Ascending aorta (tissue), 2 donors: ENCODE measurements at regions of chr1 and their contacts with region 1.

Region 1: GRCh38 chr1:9867408-9868243 is 42.4 kb downstream of the CTNNBIP1 start:
- DNase-seq: peak; percentile 20 to 90
- H3K4me3 ChIP-seq: no peak overlapping the region
- H3K27ac ChIP-seq: no peak overlapping the region
- H3K4me1 ChIP-seq: no peaks in the 10 kb centered on the region
- H3K27me3 ChIP-seq: no peaks in the 10 kb centered on the region
- CTCF ChIP-seq: peak; percentile 93 to 97 (median 94)

Region 2: DNA sequence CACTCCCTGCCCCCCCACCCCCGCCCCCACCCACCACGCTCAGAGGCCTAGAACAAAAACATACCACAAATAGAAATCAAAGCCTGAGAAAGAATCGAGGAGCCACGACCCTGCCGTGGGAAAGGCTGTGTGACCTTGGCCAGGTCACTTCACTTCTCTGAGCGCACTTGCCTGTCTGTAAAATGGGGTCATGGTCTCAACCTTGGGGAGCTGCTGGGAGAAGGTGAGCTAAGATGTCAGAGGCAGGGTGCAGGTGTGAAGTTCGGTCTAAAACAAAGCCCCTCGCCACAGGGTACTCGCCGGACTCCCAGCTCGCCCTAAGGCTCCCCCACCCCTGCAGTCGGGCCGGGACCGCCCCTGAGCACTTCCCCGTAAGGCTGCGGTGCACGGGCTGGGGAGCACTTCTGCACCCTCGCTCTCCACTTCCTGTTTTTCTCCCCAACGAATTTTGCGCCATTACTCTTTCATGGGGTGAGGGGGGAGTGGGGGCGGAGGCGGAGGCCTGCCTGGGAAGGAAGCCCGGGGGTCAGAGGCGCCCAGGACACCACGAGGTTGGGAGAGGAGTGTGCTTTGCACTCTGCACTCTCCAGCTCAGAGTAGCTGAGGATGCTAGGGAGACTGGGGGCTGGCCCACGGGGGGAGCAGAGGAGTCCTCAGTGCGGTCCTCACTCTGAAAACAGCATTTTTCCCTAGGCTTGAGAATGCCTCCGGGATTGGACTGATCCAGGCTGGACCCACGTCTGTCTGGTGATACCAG is 238.0 kb before region 1 on chr1:
- intact Hi-C with region 1: loop called (anchors 1 kb)
- DNase-seq: peak; percentile 25 to 74
- H3K4me3 ChIP-seq: peak overlapping the region in 1 of 2 donors; percentile 15
- H3K27ac ChIP-seq: no peak overlapping the region
- H3K4me1 ChIP-seq: no peaks in the 10 kb centered on the region
- H3K27me3 ChIP-seq: no peaks in the 10 kb centered on the region
- CTCF ChIP-seq: no peak

Region 3: GRCh38 chr1:9724706-9725476 is 142.7 kb before region 1 on chr1:
- intact Hi-C with region 1: loop called (anchors 1 kb)
- DNase-seq: no peak
- H3K4me3 ChIP-seq: no peak overlapping the region
- H3K27ac ChIP-seq: no peak overlapping the region
- H3K4me1 ChIP-seq: no peaks in the 10 kb centered on the region
- H3K27me3 ChIP-seq: no peaks in the 10 kb centered on the region
- CTCF ChIP-seq: peak; percentile 65 to 74 (median 67)

Region 4: GRCh38 chr1:9784508-9785133 is 83.0 kb before region 1 on chr1:
- intact Hi-C with region 1: loop called (anchors 1 kb)
- DNase-seq: no peak
- H3K4me3 ChIP-seq: no peak overlapping the region
- H3K27ac ChIP-seq: no peak overlapping the region
- H3K4me1 ChIP-seq: no peaks in the 10 kb centered on the region
- H3K27me3 ChIP-seq: no peaks in the 10 kb centered on the region
- CTCF ChIP-seq: peak; percentile 56 to 61 (median 59)

Region 5: GRCh38 chr1:9823943-9824701 is 43.5 kb before region 1 on chr1 and contains the start of gene CLSTN1:
- intact Hi-C with region 1: loop called (anchors 5 kb)
- DNase-seq: peak in 1 of 2 donors; percentile 94
- H3K4me3 ChIP-seq: peak within 1 kb of the TSS; percentile 89 to 96
- H3K27ac ChIP-seq: peak within 1 kb of the TSS; percentile 90 to 96
- H3K4me1 ChIP-seq: peaks cover 8 to 19% of the 10 kb centered on the region in 2 donors
- H3K27me3 ChIP-seq: no peaks in the 10 kb centered on the region
- CTCF ChIP-seq: no peak
- total RNA-seq, gene CLSTN1: 84.6 TPM